Ascending aorta (tissue), 2 donors: ENCODE measurements at regions of chr3 and their contacts with region 1.

Region 1: DNA sequence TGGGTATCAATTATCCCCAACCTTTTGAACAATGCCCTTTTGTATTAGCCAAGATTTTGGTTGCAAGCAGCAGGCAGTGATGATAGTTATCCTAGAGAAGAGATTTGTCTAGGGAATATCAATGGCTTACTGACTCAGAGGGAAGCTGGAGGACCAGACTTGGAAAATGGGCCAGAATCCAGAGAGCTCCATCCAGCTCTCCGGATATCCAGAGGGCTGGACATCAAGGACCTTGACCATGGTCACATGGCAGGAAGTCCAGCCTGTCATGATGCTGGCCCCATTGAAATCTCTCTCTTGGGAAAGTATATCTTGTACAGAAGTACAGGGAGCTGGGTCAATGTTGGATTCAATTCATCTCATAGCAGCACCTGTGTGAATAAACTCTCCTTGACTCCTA is 148.5 kb upstream of the PDZRN3 start:
- DNase-seq: no peak
- H3K4me3 ChIP-seq: no peak overlapping the region
- H3K27ac ChIP-seq: peak overlapping the region in 1 of 2 donors; percentile 0
- H3K4me1 ChIP-seq: peaks cover 0 to 9% of the 10 kb centered on the region in 2 donors
- H3K27me3 ChIP-seq: no peaks in the 10 kb centered on the region
- CTCF ChIP-seq: no peak

Region 2: DNA sequence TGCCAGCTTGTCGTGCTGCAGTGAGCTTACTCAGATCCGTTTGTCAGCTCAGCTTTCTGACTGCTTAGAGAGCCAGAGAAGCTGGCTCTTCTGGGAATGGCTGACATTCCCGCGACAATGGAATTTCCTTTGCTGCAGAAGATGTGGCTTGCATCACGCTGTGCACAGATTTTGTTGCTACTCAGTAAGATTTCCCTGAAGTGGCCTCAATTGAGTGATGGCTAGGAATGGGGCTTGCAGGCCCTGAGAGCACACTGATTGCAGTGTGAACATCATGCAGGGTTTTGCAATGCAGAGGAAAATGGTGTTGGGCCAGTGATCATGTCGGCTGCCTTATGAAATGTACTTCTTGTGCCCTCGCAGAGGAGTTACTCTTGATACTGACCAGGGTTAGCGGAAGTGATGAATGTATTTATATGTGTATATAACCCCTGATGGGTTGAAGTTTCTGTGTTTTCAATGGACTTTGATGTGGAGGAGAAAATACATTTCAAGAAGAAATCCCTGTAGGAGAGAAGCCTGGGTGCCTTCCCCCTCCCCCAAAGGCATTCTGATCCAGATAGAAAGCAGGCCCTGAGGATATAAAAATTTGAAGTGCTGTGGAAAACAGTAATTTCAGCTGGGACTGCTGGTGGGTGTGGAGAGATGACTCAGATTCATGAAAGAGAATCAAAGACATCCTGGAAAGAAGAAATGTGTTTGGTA is 46.0 kb before region 1 on chr3:
- intact Hi-C with region 1: loop called (anchors 5 kb)
- DNase-seq: peak in 1 of 2 donors; percentile 75
- H3K4me3 ChIP-seq: no peak overlapping the region
- H3K27ac ChIP-seq: peak overlapping the region; percentile 12 to 44
- H3K4me1 ChIP-seq: peaks cover 0 to 5% of the 10 kb centered on the region in 2 donors
- H3K27me3 ChIP-seq: no peaks in the 10 kb centered on the region
- CTCF ChIP-seq: no peak